Thyroid gland (tissue), 4 donors: ENCODE measurements at regions of chr19 and their contacts with region 1.

Region 1: GRCh38 chr19:48970923-48971395 is 5.8 kb downstream of the FTL start:
- DNase-seq: peak; percentile 71 to 74
- H3K4me3 ChIP-seq: no peak overlapping the region
- H3K27ac ChIP-seq: no peak overlapping the region
- H3K4me1 ChIP-seq: peaks cover 23 to 26% of the 10 kb centered on the region in 2 donors
- H3K27me3 ChIP-seq: no peaks in the 10 kb centered on the region
- CTCF ChIP-seq: peak; percentile 57 to 94 (median 72)
- POLR2A ChIP-seq: no peak

Region 2: DNA sequence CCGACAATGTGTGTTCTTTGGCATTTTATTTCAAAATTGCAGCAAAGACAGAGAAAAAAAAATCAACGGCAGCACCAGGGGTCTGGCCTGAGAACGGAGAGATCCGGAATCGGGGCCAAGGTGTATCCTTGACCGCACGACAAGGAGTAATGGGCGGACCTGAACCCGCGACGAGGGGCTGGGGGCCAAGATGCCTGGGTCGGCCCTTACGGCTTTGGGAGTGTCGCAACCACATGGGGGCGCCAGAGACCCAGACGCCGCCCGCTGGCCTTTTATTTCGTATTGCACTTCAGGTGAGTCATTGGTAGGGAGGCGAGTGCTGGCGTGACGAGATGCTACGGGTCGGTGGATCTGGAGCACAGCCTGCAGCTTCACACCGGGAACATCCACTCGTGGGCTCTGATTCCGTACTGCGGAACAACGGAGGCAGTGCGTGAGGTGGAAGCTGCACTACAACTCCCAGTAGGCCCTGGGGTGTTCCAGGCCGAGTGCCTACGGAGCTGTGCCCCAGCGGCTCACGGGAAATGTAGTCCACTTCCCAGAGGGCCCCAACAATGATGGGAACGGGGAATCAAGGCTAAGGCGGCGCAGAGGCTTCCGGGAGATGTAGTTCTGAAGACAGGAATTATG is 175.8 kb before region 1 on chr19:
- intact Hi-C with region 1: loop called (anchors 5 kb)
- DNase-seq: peak; percentile 95 to 97
- H3K4me3 ChIP-seq: no peak overlapping the region
- H3K27ac ChIP-seq: peak overlapping the region; percentile 85 to 98 (median 86)
- H3K4me1 ChIP-seq: peaks cover 6 to 18% of the 10 kb centered on the region in 2 donors
- H3K27me3 ChIP-seq: no peaks in the 10 kb centered on the region
- CTCF ChIP-seq: peak; percentile 83 to 99 (median 97)
- POLR2A ChIP-seq: peak in 1 of 2 donors; percentile 15

Region 3: GRCh38 chr19:48868114-48868886 is 102.7 kb before region 1 on chr19 and contains the start of gene PLEKHA4:
- intact Hi-C with region 1: loop called (anchors 10 kb)
- DNase-seq: peak; percentile 65 to 72
- H3K4me3 ChIP-seq: peak within 1 kb of the TSS in 1 of 3 donors; percentile 14
- H3K27ac ChIP-seq: peak within 1 kb of the TSS; percentile 23 to 85 (median 77)
- H3K4me1 ChIP-seq: peaks cover 16 to 33% of the 10 kb centered on the region in 2 donors
- H3K27me3 ChIP-seq: no peaks in the 10 kb centered on the region
- CTCF ChIP-seq: no peak
- POLR2A ChIP-seq: peak in 1 of 2 donors; percentile 48
- total RNA-seq, gene PLEKHA4: 15.2 to 21.8 (median 19.0) TPM

Region 4: DNA sequence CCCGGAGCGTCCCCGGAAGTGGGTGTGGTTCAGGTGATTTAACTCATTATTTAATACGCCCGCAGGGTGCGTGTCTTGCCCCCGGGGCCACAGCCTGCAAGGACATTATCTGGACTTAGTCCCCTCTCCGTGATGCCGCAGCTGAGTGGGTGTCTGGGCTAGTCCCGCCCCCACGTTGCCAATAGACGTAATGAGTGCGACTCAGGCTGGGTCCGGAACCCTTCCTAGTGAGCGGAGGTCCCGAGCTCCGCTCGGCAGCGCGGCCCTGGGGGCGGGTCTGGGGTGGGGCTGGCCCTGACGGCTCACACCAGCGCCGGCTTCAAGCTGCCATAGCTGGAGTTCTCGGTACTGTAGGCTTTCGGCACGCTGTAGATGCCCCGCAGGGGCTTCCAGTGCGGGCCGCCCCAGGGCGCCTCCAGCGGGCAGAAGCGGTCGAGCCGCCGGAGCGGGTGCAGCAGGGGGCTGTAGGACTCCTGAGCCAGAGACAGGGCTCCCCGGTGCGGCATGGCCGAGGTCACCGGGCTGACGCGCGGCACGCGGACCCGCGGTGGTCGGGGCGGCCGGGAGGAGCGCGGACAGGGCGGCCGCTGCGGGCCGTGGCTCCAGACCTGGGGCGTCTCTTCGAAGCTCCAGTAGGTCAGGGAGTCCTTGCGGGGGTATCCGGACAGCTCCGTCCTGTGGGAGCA is 46.9 kb after region 1 on chr19:
- intact Hi-C with region 1: no loop called
- DNase-seq: peak; percentile 25 to 33
- H3K4me3 ChIP-seq: peak overlapping the region in 1 of 3 donors; percentile 25
- H3K27ac ChIP-seq: no peak overlapping the region
- H3K4me1 ChIP-seq: peaks cover 17 to 24% of the 10 kb centered on the region in 2 donors
- H3K27me3 ChIP-seq: no peaks in the 10 kb centered on the region
- CTCF ChIP-seq: peak in 2 of 6 experiments; percentile 33 to 54
- POLR2A ChIP-seq: no peak